BJ (cell line): ENCODE measurements at regions of chr11 and their contacts with region 1.

Region 1: DNA sequence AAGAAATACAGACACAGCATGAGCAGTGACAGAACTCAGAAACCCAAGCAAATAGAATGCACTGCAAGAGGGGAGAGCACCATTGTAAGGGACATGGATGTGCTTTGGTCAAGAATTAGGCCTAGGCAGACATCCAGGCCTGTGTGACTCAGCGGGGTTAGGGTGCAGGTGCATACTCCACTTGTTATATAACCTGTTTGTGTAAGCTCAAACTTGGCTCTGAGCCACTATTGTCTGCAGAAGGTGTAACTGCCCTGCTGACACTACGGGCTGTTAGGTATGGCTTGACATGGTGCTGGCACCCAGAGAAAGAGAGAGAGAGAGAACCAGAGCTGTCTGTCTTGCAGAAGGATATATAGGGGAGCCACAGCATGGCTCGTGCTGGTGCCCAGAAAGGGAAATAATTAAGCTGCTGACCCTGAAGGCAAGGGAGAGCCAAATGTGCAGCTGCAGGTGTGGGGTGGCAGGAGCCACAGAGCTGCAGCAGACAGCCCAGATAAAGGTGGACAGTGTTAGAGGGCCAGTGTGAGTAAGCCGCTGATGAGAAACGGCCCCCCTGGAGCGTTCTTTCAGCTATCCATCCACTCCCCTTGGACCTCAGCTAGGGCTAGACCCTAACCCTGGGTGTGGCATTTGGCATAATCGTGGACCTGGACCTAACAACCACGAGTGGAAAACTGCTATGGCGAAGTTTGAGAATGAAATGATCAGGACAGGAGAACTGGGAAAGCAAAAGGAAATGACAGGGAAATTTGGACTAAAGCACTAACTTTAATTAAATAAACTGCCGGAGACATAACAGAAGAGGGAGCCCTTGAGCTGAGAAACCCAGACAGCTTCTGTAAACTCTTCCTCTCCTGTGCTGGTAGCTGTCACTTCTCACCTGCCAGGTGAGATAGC is 253.0 kb upstream of the CCDC179 start:
- DNase-seq: no peak
- H3K4me3 ChIP-seq: no peak overlapping the region
- H3K27me3 ChIP-seq: no peaks in the 10 kb centered on the region
- CTCF ChIP-seq: peak; percentile 62

Region 2: DNA sequence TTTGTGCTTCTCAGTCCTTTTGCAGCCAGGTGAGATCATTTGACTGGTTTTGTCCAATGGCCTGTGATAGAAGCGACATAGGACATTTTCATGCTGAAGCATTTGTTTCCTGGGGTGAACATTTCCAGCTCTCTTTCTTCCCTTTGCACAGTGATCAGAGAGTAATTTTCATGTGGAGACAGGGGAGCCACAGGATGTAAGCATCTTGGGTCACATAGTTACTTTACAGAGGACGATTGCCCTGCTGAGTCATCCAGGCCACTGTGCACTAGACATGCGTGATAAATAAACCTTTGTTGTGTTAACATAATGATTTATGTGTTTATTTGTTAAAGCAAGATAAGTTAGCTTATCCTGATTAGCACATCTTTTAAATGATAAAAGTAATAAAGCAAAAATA is 10.5 kb after region 1 on chr11:
- CTCF ChIA-PET with region 1: interaction called, 15 read pairs
- POLR2A ChIA-PET with region 1: no interaction called
- DNase-seq: no peak
- H3K4me3 ChIP-seq: no peak overlapping the region
- H3K27me3 ChIP-seq: no peaks in the 10 kb centered on the region
- CTCF ChIP-seq: no peak

Region 3: DNA sequence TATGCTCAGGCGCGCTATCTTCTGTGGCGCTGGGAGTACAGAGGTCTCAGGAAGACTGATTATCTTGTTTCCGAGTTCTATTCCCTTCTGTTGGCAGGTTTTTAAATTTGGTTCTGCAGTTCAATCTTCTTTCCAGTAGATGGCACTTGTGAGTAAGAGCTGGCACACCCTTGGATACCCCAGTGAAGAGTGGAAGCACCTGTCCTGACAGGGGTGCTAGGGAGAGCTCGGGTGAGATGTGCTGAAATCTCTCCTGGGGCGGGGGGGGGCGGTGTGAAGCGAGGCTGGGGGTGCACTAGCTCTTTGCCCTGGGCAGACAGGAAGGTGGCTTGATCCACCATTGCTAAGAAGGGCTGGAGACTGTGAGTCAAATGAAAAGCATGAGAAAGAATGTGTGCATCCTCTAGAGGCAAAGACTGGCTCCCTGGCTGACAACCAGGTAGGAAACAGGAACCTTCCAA is 426.9 kb after region 1 on chr11:
- CTCF ChIA-PET with region 1: interaction called, 21 read pairs
- POLR2A ChIA-PET with region 1: no interaction called
- DNase-seq: no peak
- H3K4me3 ChIP-seq: no peak overlapping the region
- H3K27me3 ChIP-seq: no peaks in the 10 kb centered on the region
- CTCF ChIP-seq: peak; percentile 83

Region 4: DNA sequence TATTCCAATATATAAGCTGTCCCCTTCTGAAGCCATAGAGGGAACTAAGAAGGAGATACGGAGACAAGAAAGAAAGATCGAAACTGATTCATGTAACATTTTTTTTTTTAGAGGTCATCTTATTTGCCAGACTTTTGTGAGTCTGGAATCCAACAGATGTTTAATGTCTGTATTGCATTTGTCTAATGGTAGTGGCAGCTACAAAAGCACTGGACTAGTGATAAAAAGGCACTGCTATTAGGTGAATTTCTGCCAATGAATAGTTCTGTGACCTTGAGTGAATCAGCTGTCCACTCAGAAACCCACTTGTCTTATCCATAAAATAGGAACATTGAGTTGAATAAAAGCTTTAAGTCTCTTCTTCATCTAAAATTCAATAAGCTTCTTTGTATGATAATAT is 1357.8 kb after region 1 on chr11:
- CTCF ChIA-PET with region 1: no interaction called
- POLR2A ChIA-PET with region 1: no interaction called
- DNase-seq: no peak
- H3K4me3 ChIP-seq: no peak overlapping the region
- H3K27me3 ChIP-seq: no peaks in the 10 kb centered on the region
- CTCF ChIP-seq: no peak